ENCODE measurements at regions of chr9 and their contacts with region 1.

Region 1: GRCh38 chr9:134399435-134400056 is 73.3 kb downstream of the RXRA start:
- DNase-seq: peak; percentile 52
- H3K4me3 ChIP-seq: no peak overlapping the region
- H3K27ac ChIP-seq: no peak overlapping the region
- H3K4me1 ChIP-seq: peaks cover 46% of the 10 kb centered on the region
- H3K27me3 ChIP-seq: no peaks in the 10 kb centered on the region
- CTCF ChIP-seq: peak; percentile 56 to 63
- POLR2A ChIP-seq: no peak

Region 2: DNA sequence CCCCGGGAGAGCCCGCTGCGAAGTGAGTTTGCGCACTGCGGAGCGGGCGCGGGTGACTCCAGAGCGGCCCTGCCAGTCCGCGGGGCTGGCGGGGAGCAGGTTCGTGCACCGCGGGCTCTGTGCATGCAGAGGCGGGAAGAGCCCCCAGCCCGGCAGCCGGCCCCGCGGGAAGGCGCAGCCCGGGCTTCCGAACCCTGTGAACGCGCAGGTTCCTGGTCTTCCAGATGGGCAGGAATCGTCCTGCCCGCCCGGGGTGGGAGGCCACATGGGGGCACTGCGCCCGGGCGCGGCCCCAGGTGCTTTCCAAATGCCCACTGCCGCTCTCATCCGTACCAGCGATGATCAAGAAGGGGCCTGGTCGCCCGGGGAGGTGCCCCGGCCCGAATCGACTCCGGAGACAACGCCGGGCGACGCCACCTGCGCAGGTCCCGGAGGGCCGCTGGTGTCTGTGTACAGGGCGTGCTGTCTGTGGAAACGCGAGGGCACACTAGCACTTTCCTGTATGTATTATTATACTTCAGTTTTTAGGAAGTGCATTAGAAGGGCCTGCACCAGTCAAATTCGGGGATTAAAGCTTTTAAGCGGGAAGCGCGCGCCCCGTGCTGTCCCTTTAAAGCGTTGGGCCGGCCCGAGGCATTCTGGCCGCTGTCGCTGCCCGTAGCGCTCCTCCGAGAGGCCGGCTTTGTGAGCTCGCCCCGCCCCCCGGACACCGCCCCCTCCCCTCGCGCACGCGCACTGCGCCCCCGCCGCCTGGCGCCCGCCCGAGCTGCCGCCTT is 264.0 kb before region 1 on chr9 and contains the start of gene WDR5:
- CTCF ChIA-PET with region 1: no interaction called
- POLR2A ChIA-PET with region 1: no interaction called
- dilution Hi-C with region 1: no loop called
- intact Hi-C with region 1: no loop called
- DNase-seq: peak; percentile 81
- H3K4me3 ChIP-seq: peak within 1 kb of the TSS; percentile 84 to 97 (median 93)
- H3K27ac ChIP-seq: peak within 1 kb of the TSS; percentile 48
- H3K4me1 ChIP-seq: peaks cover 10% of the 10 kb centered on the region
- H3K27me3 ChIP-seq: no peaks in the 10 kb centered on the region
- CTCF ChIP-seq: peak in 1 of 2 donors; percentile 12
- POLR2A ChIP-seq: peak; percentile 61
- total RNA-seq, gene WDR5: 42.4 and 42.5 TPM in 2 replicates

Region 3: GRCh38 chr9:134344068-134344799 is 55.3 kb before region 1 on chr9:
- CTCF ChIA-PET with region 1: no interaction called
- POLR2A ChIA-PET with region 1: no interaction called
- dilution Hi-C with region 1: no loop called
- intact Hi-C with region 1: loop called (anchors 2 kb)
- DNase-seq: no peak
- H3K4me3 ChIP-seq: no peak overlapping the region
- H3K27ac ChIP-seq: no peak overlapping the region
- H3K4me1 ChIP-seq: peaks cover 34% of the 10 kb centered on the region
- H3K27me3 ChIP-seq: no peaks in the 10 kb centered on the region
- CTCF ChIP-seq: peak in 1 of 2 donors; percentile 14
- POLR2A ChIP-seq: no peak

Region 4: DNA sequence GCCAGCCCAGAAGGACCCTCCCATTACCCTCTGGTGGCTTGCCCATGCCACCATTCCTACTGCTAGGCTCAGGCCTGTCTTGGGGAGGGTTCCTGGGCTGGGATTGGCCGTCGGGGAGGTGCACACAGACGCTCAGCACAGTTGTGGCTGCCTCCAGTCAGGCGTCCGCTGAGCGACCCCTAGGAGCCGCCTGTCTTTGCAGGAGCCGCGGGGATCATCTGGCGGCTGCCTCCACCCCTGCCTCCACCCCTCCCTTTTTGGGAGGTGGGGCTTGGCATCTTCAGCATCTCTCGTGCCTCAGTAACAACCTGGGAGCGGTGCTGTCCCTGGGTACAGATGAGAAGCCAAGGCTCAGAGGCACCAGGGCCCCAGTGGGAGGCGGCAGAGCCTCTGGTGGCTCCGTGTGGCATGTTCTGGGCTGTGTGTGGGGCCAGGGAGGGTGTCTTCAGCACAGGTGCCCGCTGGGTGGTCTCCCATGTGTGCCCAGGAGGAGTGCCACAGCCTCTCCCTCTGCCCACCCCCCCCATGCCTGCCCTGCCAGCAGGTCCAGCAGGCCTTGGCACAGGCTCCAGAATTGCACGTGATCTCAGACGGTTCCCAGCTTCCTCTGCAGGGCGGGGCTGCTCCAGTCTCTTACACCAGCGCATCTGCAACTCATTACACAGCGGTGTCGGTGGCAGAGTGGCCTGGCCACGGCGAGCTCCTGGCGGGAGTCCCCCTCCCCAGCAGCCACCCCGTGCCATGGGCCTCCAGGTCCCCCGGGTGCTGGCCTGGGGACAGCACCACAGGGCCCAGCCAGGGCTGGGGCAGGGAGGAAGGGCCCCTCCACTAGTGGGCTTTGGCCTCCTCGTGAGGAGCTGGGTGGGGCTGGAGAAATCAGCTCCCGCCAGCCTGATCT is 33.5 kb before region 1 on chr9:
- CTCF ChIA-PET with region 1: no interaction called
- POLR2A ChIA-PET with region 1: interaction called, 3 read pairs
- dilution Hi-C with region 1: no loop called
- intact Hi-C with region 1: loop called (anchors 5 kb)
- DNase-seq: peak; percentile 77
- H3K4me3 ChIP-seq: no peak overlapping the region
- H3K27ac ChIP-seq: no peak overlapping the region
- H3K4me1 ChIP-seq: peaks cover 11% of the 10 kb centered on the region
- H3K27me3 ChIP-seq: no peaks in the 10 kb centered on the region
- CTCF ChIP-seq: no peak
- POLR2A ChIP-seq: no peak

Measured in endothelial cell of umbilical vein (primary cell).